Activated CD4-positive, alpha-beta T cell treated with anti-CD3 and anti-CD28 coated beads for 36 hours (primary cell): ENCODE measurements at regions of chr12 and their contacts with region 1.

Region 1: GRCh38 chr12:38588624-38589309 is 272.2 kb downstream of the ALG10B start:
- DNase-seq: no peak
- ATAC-seq: no peak
- H3K4me3 Mint-ChIP-seq: no peak overlapping the region
- H3K27ac Mint-ChIP-seq: no peak overlapping the region
- H3K4me1 Mint-ChIP-seq: no peaks in the 10 kb centered on the region
- H3K27me3 Mint-ChIP-seq: no peaks in the 10 kb centered on the region

Region 2: DNA sequence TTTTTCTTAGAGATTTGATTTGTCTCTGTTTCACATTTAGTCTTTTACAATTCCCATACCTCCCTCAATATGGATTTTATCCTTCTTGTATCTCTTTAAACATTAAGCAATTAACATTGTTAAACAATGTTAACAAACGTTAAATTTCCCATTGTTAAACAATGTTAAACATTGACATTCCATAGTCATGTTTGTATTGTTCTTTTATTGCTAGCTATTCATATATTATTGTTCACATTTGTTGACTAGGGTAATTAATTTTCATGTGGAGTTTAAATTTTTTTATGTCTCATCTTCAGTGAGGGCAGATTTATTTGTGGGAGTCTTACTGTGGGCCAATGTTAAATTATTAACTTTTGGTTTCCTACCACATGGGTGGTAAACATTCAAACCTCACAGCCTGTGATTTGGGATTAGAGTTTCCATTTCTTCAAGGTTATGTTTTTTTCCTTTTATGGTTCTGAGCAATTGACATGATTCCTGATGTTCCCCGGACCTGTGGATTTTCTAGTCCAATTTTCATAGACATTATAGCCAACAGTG is 22.1 kb after region 1 on chr12:
- CTCF ChIA-PET with region 1: no interaction called
- POLR2A ChIA-PET with region 1: no interaction called
- intact Hi-C with region 1: loop called in 1 of 2 experiments (anchors 2 kb)
- DNase-seq: no peak
- ATAC-seq: no peak
- H3K4me3 Mint-ChIP-seq: no peak overlapping the region
- H3K27ac Mint-ChIP-seq: no peak overlapping the region
- H3K4me1 Mint-ChIP-seq: no peaks in the 10 kb centered on the region
- H3K27me3 Mint-ChIP-seq: no peaks in the 10 kb centered on the region